MCF 10A (cell line): ENCODE measurements at regions of chr1 and their contacts with region 1.

Region 1: DNA sequence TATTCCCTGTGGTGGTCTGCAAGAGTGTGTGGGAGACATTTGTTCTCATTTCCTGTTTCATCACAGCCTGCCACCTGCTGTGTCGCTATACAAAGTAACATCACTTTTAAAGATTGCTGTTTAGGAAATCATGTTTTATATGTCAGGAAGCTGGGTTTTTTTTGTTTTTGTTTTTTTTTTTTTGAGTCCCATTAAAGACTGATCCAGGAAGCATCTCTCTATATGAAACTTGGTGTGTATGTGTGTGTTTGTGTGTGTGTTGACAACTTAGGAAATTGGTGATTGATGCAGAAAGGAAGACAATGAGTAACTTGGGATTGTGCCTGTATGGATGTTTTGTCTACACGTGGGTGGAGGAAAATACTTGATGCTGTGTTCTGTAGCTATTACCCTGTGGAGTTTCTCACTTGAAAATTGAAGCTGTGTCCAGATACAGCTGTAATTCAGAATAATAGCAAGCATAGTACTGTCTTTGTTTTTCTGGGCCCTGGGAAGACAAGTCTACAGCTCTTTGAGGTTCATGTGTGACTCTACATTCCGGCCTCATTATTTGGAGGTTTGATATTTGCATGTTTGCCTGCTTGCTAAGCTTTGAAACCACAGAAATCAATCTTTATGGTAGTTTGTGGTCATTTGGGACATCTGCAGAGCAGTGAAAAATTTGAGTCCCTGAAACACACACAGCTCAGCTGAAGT is 47.9 kb downstream of the LAMC1 start:
- DNase-seq: peak; percentile 47
- H3K4me3 Mint-ChIP-seq: no peak overlapping the region
- H3K27ac Mint-ChIP-seq: peak overlapping the region; percentile 73
- H3K4me1 Mint-ChIP-seq: peaks cover 52% of the 10 kb centered on the region
- H3K27me3 Mint-ChIP-seq: no peaks in the 10 kb centered on the region
- CTCF ChIP-seq: no peak

Region 2: DNA sequence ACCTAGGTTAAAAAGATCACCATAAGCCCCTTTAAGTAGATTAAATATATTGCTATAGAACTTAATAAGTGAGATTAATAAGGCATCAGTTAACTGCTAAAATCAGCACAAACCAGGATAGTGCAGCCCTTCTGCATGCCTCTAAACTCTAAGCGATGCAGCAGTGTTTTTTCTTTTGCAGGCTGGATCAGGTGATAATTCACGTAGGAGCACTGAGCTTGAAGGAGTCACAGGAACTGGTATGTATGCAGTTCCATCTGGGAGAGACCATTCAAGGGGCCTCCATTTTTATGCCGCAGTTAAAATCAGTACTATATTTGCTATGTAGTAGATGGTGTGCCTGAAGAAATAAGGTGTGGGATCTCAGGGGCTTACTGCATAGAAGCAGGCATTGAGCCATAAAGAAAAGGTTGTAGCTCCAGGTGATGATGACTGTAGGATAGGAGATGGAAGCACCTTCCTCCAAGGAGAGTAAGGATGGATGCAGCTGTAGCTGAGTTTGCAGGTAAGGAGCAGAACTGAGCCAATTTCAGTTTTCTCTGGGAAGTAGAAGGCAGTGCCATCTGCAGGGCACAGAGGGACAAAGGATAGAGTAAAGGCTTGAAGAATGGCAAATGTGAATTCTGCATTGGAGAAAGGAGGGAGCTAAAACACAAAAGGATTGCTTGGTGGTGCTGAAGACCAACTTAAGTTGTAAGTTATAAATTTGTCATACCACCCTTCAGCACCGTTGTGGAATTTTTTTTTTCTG is 258.9 kb before region 1 on chr1:
- CTCF ChIA-PET with region 1: no interaction called
- POLR2A ChIA-PET with region 1: no interaction called
- intact Hi-C with region 1: no loop called
- DNase-seq: peak; percentile 19
- H3K4me3 Mint-ChIP-seq: no peak overlapping the region
- H3K27ac Mint-ChIP-seq: no peak overlapping the region
- H3K4me1 Mint-ChIP-seq: peaks cover 6% of the 10 kb centered on the region
- H3K27me3 Mint-ChIP-seq: no peaks in the 10 kb centered on the region
- CTCF ChIP-seq: no peak

Region 3: DNA sequence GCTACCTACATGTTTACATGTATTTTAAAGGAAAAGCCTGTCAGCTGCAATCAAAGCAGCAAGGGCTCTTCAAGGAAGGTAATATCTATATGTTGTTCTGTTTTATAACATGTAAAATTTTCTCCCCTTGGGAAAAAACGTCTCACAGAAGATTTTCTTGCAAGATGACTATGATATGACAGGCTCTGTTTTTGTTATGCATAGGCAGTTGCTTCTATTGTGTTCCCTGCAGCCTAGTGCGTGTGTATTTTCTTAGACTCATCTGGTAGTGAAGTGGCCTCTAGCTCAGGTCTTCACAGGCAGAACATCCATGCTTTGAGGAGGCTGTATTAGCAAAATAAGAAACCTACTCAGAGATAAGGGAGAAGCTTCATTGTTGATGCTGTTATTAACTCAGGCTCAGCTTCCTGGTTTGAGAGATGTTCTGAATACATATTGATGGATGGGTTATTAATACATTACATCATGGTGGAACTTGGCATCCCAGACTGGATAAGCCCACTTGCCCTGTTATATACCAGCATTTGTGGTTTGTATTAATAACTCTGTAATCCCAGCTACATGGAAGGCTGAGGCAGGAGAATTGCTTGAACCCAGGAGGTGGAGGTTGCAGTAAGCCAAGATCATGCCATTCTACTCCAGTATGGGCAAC is 12.1 kb before region 1 on chr1:
- CTCF ChIA-PET with region 1: interaction called, 4 read pairs
- POLR2A ChIA-PET with region 1: interaction called, 23 read pairs
- intact Hi-C with region 1: no loop called
- DNase-seq: no peak
- H3K4me3 Mint-ChIP-seq: no peak overlapping the region
- H3K27ac Mint-ChIP-seq: no peak overlapping the region
- H3K4me1 Mint-ChIP-seq: peaks cover 15% of the 10 kb centered on the region
- H3K27me3 Mint-ChIP-seq: no peaks in the 10 kb centered on the region
- CTCF ChIP-seq: no peak

Region 4: DNA sequence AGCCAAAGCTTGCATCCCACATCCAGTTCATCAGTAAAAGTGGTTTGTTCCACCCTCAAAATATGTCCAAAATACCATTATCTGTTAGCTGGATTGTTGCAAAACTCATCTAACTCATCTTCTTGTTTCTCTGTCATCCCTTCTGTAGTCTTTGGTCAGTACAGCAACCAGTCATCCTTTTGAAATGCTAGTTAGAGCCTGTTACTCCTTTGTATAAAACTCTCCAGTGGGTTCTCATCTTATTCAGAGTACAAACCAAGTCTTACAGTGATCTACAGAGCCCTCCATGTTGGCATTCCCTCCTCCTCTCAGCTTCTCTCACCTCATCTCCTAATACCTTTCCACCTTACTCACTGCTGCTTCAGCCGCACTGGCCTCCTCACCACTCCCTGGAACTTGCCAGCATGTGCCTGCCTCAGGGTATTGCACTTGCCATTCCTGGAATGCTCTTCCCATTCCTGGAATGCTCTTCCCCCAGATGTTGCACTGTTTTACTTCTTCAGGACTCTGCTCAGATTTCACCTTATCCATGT is 22.8 kb after region 1 on chr1:
- CTCF ChIA-PET with region 1: interaction called, 4 read pairs
- POLR2A ChIA-PET with region 1: interaction called, 11 read pairs
- intact Hi-C with region 1: no loop called
- DNase-seq: peak; percentile 90
- H3K4me3 Mint-ChIP-seq: peak overlapping the region; percentile 2
- H3K27ac Mint-ChIP-seq: peak overlapping the region; percentile 4
- H3K4me1 Mint-ChIP-seq: peaks cover 39% of the 10 kb centered on the region
- H3K27me3 Mint-ChIP-seq: no peaks in the 10 kb centered on the region
- CTCF ChIP-seq: no peak

Region 5: DNA sequence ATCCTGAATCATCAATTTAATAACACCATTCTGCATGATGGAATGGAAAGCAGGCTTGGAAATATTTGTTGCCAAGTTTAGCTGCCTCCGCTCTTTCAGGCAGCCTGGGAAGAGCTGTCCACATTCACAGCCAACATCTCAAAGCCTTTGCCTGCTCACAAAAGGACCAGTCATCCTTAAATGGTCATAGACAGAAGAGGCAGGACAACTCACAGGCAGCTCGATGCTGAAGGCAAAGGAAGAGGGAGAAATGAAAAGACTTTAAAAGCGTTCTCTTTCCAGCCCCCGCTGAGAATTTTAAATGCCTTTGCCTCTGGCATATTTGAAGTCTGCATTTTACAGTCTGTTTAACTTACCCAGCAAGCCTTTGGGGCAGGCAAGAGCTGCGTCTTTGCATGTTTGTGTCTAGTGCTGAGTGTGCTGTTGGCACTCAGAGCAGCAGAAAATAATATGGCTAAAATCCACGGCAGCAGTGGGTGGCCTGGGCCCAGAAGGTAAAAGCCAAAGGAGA is 278.2 kb after region 1 on chr1:
- CTCF ChIA-PET with region 1: no interaction called
- POLR2A ChIA-PET with region 1: no interaction called
- intact Hi-C with region 1: no loop called
- DNase-seq: no peak
- H3K4me3 Mint-ChIP-seq: no peak overlapping the region
- H3K27ac Mint-ChIP-seq: no peak overlapping the region
- H3K4me1 Mint-ChIP-seq: no peaks in the 10 kb centered on the region
- H3K27me3 Mint-ChIP-seq: peaks cover 19% of the 10 kb centered on the region
- CTCF ChIP-seq: no peak